ENCODE measurements at regions of chr14 and their contacts with region 1.

Region 1: DNA sequence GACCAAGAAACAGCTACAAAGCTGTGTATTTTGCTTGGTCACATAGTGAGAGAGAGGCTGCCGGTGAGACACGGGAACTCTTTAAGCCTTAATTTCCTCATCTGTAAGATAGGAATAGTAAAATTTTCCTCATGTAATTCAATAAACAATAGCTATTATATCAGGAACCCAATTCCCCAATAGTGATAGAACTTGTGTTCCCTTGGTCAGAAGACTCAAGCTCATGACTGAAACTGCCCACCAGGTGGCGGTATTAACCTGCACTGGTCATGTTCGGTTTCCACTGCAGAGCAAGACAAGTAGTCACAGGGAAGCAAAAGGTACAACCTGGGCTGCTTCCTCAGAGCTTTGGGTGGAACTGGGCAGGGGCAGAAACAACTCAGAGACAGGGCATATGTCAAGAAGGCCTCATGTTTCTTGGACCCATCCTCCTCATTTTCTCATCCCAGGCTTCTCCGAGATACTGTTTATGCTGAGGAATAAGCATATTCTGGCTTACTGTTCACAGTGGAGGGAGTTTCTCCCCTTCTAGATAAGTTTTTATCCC is 4.2 kb upstream of the AJUBA start:
- DNase-seq: peak; percentile 92 to 95
- H3K4me3 ChIP-seq: no peak overlapping the region
- H3K27ac ChIP-seq: no peak overlapping the region
- H3K4me1 ChIP-seq: peaks cover 4 to 10% of the 10 kb centered on the region in 2 donors
- H3K27me3 ChIP-seq: no peaks in the 10 kb centered on the region
- CTCF ChIP-seq: peak; percentile 78 to 96 (median 91)
- POLR2A ChIP-seq: no peak

Region 2: GRCh38 chr14:22929848-22930364 is 56.7 kb before region 1 on chr14:
- intact Hi-C with region 1: loop called (anchors 10 kb)
- DNase-seq: no peak
- H3K4me3 ChIP-seq: peak overlapping the region in 2 of 3 donors; percentile 23 to 43
- H3K27ac ChIP-seq: peak overlapping the region; percentile 63 to 87 (median 79)
- H3K4me1 ChIP-seq: peaks cover 6 to 10% of the 10 kb centered on the region in 2 donors
- H3K27me3 ChIP-seq: no peaks in the 10 kb centered on the region
- CTCF ChIP-seq: no peak
- POLR2A ChIP-seq: no peak

Region 3: GRCh38 chr14:23057757-23058653 is 71.4 kb after region 1 on chr14:
- intact Hi-C with region 1: loop called (anchors 2 kb)
- DNase-seq: peak; percentile 88 to 91
- H3K4me3 ChIP-seq: peak overlapping the region in 2 of 3 donors; percentile 14 to 69
- H3K27ac ChIP-seq: peak overlapping the region in 1 of 3 donors; percentile 74
- H3K4me1 ChIP-seq: peaks cover 4 to 21% of the 10 kb centered on the region in 2 donors
- H3K27me3 ChIP-seq: no peaks in the 10 kb centered on the region
- CTCF ChIP-seq: peak; percentile 86 to 96 (median 92)
- POLR2A ChIP-seq: no peak

Measured in thyroid gland (tissue), 4 donors.